ENCODE measurements at regions of chr15 and their contacts with region 1.

Region 1: DNA sequence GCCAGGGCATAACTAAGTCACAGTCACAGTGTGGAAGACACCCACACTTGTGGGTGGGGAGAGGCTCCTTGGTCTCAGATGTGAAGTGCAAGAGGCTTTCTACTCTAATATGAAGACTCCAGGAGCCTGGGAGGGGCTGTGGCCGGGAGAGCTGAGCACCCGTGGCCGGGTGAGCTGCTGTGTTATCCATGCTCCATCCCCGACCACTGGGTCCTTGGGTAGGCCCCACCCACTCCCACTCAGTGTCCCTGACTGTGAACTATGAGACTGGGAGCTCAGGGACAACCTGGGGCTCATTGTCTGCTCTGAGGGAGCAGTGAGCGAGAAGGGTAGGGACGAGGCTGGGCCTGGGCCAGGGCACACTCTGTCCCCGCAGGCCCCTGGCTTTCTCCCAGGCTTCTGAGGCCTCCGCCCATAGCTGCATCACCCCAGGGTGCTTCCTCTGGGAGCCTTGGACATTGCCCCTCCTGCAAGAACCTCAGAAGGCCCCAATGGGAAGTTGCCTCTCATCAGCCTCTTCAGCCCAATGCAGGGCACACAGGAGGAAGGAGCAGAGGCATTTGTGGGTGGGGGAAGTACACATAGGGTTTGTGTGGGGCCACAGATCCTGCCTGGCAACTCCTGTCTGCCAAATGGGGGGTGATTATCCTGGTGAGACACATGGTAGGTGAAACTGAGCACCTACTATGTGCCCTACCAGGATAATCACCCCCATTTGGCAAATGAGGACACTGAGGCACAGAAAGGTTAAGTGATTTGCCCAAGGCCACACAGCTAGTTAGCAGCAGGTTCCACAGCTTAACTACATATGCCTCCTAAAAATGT is 2.4 kb downstream of the ANPEP start:
- DNase-seq: peak; percentile 56
- ATAC-seq: peak; percentile 64
- H3K4me3 ChIP-seq: peak overlapping the region; percentile 78 to 94 (median 88); a peak in 4 of 6 replicates
- H3K27ac ChIP-seq: peak overlapping the region; percentile 91
- H3K4me1 ChIP-seq: peaks cover 85% of the 10 kb centered on the region
- H3K27me3 ChIP-seq: no peaks in the 10 kb centered on the region; a peak in 1 of 5 replicates
- CTCF ChIP-seq: no peak
- EP300 ChIP-seq: no peak
- POLR2A ChIP-seq: peak in 1 of 2 experiments; percentile 55; a peak in 1 of 4 replicates
- RAD21 ChIP-seq: no peak

Region 2: GRCh38 chr15:89690276-89691218 is 121.7 kb before region 1 on chr15 and contains the starts of genes PEX11A and WDR93:
- CTCF ChIA-PET with region 1: no interaction called
- POLR2A ChIA-PET with region 1: no interaction called
- in situ Hi-C with region 1: no loop called
- intact Hi-C with region 1: loop called (anchors 1 kb)
- DNase-seq: peak; percentile 75
- ATAC-seq: peak; percentile 99
- H3K4me3 ChIP-seq: peak within 1 kb of the TSS; percentile 72 to 83 (median 79)
- H3K27ac ChIP-seq: peak within 1 kb of the TSS; percentile 68
- H3K4me1 ChIP-seq: peaks cover 32% of the 10 kb centered on the region
- H3K27me3 ChIP-seq: no peaks in the 10 kb centered on the region; a peak in 1 of 5 replicates
- CTCF ChIP-seq: no peak
- EP300 ChIP-seq: no peak
- POLR2A ChIP-seq: peak; percentile 70 to 92
- RAD21 ChIP-seq: no peak
- total RNA-seq, gene PEX11A: 13.9 and 15.1 TPM in 2 replicates
- total RNA-seq, gene WDR93: not detected in 2 replicates

Region 3: DNA sequence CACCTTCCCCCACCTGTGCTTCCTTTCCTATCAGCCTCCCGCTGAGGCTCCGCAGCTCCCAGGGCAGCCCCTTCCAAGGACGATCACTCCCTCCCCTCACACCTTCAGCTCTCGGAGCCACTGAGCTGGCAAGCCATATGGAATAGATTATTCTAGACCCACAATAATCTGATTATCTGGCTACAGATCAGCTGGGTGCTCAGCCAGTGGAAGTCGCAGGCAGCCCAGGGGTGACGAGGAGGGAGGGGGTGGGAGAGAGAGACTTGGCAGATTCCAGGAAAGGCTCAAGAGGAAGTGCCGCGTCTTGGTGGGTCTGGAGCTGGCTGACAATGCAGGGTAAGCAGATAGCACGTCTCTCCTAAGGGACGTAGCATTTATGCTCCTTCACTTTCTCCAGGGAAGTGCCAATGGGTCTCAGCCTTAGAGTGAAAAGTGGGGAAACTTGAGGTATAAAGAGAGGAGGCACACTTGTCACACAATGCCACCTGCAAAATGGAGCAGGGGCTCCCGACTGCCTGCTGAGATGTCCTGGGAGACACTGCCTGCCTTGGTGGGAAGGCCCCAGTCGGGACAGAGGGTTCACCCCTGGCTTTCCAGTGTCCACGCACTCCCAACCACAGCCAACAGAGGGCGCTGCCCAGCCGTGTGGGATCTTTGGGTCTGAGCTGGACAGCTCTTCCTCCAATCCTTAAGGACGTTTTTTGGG is 51.8 kb before region 1 on chr15:
- CTCF ChIA-PET with region 1: no interaction called
- POLR2A ChIA-PET with region 1: interaction called, 6 read pairs
- in situ Hi-C with region 1: no loop called
- intact Hi-C with region 1: loop called (anchors 5 kb)
- DNase-seq: peak; percentile 61
- ATAC-seq: peak; percentile 91
- H3K4me3 ChIP-seq: peak overlapping the region in 1 of 3 experiments; percentile 53; a peak in 1 of 6 replicates
- H3K27ac ChIP-seq: no peak overlapping the region
- H3K4me1 ChIP-seq: peaks cover 54% of the 10 kb centered on the region
- H3K27me3 ChIP-seq: peaks cover 7 to 18% of the 10 kb centered on the region in 2 experiments
- CTCF ChIP-seq: peak; percentile 98
- EP300 ChIP-seq: no peak
- POLR2A ChIP-seq: no peak
- RAD21 ChIP-seq: peak; percentile 96

Region 4: GRCh38 chr15:89845305-89845893 is 33.2 kb after region 1 on chr15:
- CTCF ChIA-PET with region 1: no interaction called
- POLR2A ChIA-PET with region 1: interaction called, 3 read pairs
- in situ Hi-C with region 1: no loop called
- intact Hi-C with region 1: loop called (anchors 5 kb)
- DNase-seq: peak; percentile 66
- ATAC-seq: no peak
- H3K4me3 ChIP-seq: no peak overlapping the region
- H3K27ac ChIP-seq: no peak overlapping the region
- H3K4me1 ChIP-seq: peaks cover 14% of the 10 kb centered on the region
- H3K27me3 ChIP-seq: no peaks in the 10 kb centered on the region
- CTCF ChIP-seq: no peak
- EP300 ChIP-seq: no peak; a peak in 1 of 4 replicates
- POLR2A ChIP-seq: no peak
- RAD21 ChIP-seq: no peak